ENCODE measurements at regions of chr2 and their contacts with region 1.

Region 1: GRCh38 chr2:101252408-101253012 is at the start of gene CNOT11:
- DNase-seq: peak; percentile 99
- H3K4me3 Mint-ChIP-seq: peak within 1 kb of the TSS; percentile 96
- H3K27ac Mint-ChIP-seq: peak within 1 kb of the TSS; percentile 93
- H3K4me1 Mint-ChIP-seq: peaks cover 52% of the 10 kb centered on the region
- H3K27me3 Mint-ChIP-seq: no peaks in the 10 kb centered on the region
- total RNA-seq, gene CNOT11: 60.3 to 65.9 TPM

Region 2: DNA sequence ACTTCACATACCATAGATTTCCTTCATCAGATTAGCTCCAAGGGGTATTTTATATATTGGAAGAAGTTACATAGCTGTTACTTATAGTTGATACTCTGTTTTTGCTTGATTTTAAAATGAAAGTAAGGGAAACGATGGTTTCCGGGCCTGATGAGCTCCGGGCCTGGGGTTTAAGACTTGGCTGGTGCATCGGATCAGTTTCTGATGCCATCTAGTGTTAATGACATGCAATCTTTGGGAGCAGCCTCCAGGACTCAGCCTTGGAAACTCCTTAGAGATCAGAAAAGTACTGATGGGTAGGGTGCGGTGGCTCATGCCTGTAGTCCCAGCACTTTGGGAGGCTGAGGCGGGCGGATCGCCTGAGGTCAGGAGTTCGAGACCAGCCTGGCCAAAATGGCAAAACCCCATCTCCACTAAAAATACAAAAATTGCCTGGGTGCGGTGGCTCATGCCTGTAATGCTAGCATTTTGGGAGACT is 47.0 kb before region 1 on chr2:
- CTCF ChIA-PET with region 1: interaction called, 15 read pairs
- POLR2A ChIA-PET with region 1: interaction called, 6 read pairs
- DNase-seq: peak; percentile 62
- H3K4me3 Mint-ChIP-seq: peak overlapping the region; percentile 21
- H3K27ac Mint-ChIP-seq: peak overlapping the region; percentile 59
- H3K4me1 Mint-ChIP-seq: peaks cover 11% of the 10 kb centered on the region
- H3K27me3 Mint-ChIP-seq: peaks cover 2% of the 10 kb centered on the region

Region 3: GRCh38 chr2:101238930-101239759 is 13.4 kb before region 1 on chr2:
- CTCF ChIA-PET with region 1: interaction called, 13 read pairs
- POLR2A ChIA-PET with region 1: interaction called, 4 read pairs
- DNase-seq: no peak
- H3K4me3 Mint-ChIP-seq: no peak overlapping the region
- H3K27ac Mint-ChIP-seq: no peak overlapping the region
- H3K4me1 Mint-ChIP-seq: peaks cover 9% of the 10 kb centered on the region
- H3K27me3 Mint-ChIP-seq: no peaks in the 10 kb centered on the region

Region 4: GRCh38 chr2:101282980-101283379 is 30.5 kb after region 1 on chr2:
- CTCF ChIA-PET with region 1: no interaction called
- POLR2A ChIA-PET with region 1: interaction called, 17 read pairs
- DNase-seq: no peak
- H3K4me3 Mint-ChIP-seq: no peak overlapping the region
- H3K27ac Mint-ChIP-seq: no peak overlapping the region
- H3K4me1 Mint-ChIP-seq: peaks cover 17% of the 10 kb centered on the region
- H3K27me3 Mint-ChIP-seq: no peaks in the 10 kb centered on the region

Region 5: GRCh38 chr2:101328474-101329007 is 76.0 kb after region 1 on chr2:
- CTCF ChIA-PET with region 1: interaction called, 4 read pairs
- POLR2A ChIA-PET with region 1: interaction called, 31 read pairs
- DNase-seq: peak; percentile 69
- H3K4me3 Mint-ChIP-seq: no peak overlapping the region
- H3K27ac Mint-ChIP-seq: no peak overlapping the region
- H3K4me1 Mint-ChIP-seq: peaks cover 10% of the 10 kb centered on the region
- H3K27me3 Mint-ChIP-seq: no peaks in the 10 kb centered on the region

Region 6: DNA sequence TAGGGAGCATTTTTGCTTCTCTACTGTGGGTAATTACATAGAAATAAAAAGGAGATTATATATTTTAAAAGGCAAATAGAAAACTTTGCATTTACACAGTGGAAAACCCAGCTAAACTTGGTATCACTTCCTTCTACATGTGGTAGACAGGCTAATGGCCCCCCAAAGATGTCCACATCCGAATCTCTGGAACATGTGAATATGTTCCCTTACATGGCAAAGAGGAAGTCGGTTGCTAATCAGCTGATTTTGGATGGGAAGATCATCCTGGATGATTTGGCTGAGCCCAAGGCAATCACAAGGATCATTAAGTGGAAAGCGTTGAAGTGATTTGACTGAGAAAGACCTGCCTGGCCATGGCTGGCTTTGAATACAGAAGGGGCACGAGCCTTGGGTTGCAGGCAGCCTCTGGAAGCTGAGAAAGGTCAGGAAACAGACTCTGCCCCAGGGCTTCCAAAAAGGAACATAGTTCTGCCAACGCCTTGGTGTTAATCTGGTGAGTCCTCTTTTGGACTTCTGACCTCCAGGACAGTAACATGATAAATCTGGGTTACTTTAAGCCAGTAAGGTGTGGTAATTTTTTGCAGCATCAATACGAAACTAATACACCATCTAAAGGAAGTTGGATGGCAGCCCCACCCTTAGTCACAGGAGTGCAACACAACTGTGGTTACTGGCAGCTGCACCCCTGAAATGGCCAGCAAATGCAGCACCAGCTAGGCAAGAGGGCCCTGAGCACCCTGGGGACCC is 108.8 kb after region 1 on chr2:
- CTCF ChIA-PET with region 1: interaction called, 3 read pairs
- POLR2A ChIA-PET with region 1: interaction called, 23 read pairs
- DNase-seq: peak; percentile 72
- H3K4me3 Mint-ChIP-seq: peak overlapping the region; percentile 5
- H3K27ac Mint-ChIP-seq: peak overlapping the region; percentile 87
- H3K4me1 Mint-ChIP-seq: peaks cover 46% of the 10 kb centered on the region
- H3K27me3 Mint-ChIP-seq: peaks cover 5% of the 10 kb centered on the region

Region 7: DNA sequence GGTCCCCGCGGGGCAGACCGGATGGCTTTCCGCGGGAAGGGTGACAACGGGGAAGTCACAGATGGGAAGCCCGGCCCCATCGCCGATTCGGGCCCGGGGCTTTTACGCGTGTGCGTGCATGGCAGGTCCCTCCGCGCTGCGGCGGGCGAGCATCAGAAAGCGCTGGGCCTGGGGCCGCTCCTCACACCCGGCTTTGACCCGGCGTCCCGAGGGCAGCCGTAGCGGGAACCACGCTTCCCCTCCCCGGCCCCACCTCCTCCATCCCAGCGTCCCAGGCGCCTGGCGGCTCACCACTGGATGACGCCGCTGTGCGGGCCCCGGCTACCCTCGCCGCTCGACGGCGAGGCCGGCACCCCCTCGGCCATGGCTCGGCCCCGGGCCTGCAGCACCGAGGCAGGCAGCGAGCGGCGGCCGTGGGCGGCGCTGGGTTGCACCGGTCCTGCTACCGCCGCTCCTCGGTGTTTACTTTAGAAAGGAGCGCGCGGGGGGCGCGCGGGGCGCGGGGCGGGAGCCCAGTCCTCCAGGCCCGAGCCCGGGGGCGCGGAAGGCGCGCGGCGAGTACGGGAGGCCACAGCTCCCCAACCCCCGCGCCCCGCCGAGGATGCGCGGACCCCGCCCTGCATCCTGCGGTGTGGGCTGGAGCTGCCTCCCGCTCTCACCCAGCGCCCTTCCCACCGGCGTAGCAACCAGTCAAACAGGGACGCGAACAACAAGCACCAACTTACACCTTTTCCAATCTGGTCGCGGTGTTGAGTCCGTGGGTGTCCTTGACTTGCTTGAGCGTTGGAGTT is 221.6 kb after region 1 on chr2:
- CTCF ChIA-PET with region 1: no interaction called
- POLR2A ChIA-PET with region 1: interaction called, 12 read pairs
- DNase-seq: peak; percentile 59
- H3K4me3 Mint-ChIP-seq: peak overlapping the region; percentile 79
- H3K27ac Mint-ChIP-seq: peak overlapping the region; percentile 93
- H3K4me1 Mint-ChIP-seq: peaks cover 40% of the 10 kb centered on the region
- H3K27me3 Mint-ChIP-seq: no peaks in the 10 kb centered on the region